Activated CD4-positive, alpha-beta T cell treated with anti-CD3 and anti-CD28 coated beads, Interleukin-2, amount 10 ng/mL, durations not matched to agents 24 days and 14 days (primary cell): ENCODE measurements at regions of chr1 and their contacts with region 1.

Region 1: GRCh38 chr1:183471743-183472487 is 384 bp upstream of the SMG7 start:
- DNase-seq: peak; percentile 97
- H3K4me3 Mint-ChIP-seq: peak overlapping the region; percentile 92
- H3K27ac Mint-ChIP-seq: peak overlapping the region; percentile 100
- H3K4me1 Mint-ChIP-seq: peaks cover 29% of the 10 kb centered on the region
- H3K27me3 Mint-ChIP-seq: no peaks in the 10 kb centered on the region

Region 2: GRCh38 chr1:182839209-182840065 is 632.5 kb before region 1 on chr1 and contains the start of gene DHX9:
- intact Hi-C with region 1: loop called (anchors 2 kb)
- DNase-seq: peak; percentile 99
- H3K4me3 Mint-ChIP-seq: peak within 1 kb of the TSS; percentile 92
- H3K27ac Mint-ChIP-seq: peak within 1 kb of the TSS; percentile 94
- H3K4me1 Mint-ChIP-seq: peaks cover 37% of the 10 kb centered on the region
- H3K27me3 Mint-ChIP-seq: peaks cover 3% of the 10 kb centered on the region
- total RNA-seq, gene DHX9: 344 and 355 TPM in 2 replicates

Region 3: DNA sequence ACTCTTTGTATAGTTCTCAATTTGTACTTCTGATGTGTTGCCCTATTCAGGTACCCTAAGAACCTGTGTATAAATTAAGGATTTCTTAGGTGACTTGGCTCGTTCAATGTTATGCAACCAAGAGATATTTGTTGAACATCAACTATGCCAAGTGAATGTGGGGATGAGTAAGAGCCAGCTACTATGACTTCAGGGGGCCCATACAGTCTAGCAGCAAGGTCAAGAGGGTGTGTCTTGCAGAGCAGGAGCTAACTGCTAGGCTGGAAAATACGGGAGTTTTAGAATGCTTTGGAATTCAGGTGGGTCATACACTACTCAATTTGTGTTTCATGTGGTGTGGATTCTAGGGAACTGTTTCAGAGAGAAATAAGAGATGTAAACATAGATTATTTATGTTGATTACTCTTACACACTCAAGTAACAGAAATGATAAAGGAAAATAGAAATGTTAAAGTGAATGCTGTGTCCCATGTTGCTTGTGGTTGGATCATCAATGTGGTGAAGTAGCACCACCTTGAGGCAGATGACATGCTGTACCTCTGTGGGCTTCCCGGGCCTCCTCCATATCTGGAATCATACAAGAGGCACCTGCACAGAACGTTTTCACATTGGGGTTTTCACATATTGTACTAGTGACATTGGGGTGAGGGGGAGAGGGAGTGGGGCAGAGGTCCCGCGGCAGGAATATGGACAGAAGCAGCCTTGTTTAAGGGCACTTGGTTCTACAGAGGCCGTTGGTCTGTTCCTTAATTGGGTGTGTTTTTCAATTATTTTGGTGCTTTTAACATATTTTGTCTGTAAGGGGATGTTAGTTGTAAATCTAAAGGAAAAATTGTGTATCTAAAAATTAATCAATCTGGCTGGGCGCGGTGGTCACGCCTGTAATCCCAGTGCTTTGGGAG is 151.2 kb after region 1 on chr1:
- intact Hi-C with region 1: loop called (anchors 2 kb)
- DNase-seq: peak; percentile 86
- H3K4me3 Mint-ChIP-seq: no peak overlapping the region
- H3K27ac Mint-ChIP-seq: peak overlapping the region; percentile 2
- H3K4me1 Mint-ChIP-seq: peaks cover 10% of the 10 kb centered on the region
- H3K27me3 Mint-ChIP-seq: no peaks in the 10 kb centered on the region

Region 4: GRCh38 chr1:183734543-183735036 is 262.7 kb after region 1 on chr1:
- intact Hi-C with region 1: no loop called
- DNase-seq: no peak
- H3K4me3 Mint-ChIP-seq: no peak overlapping the region
- H3K27ac Mint-ChIP-seq: no peak overlapping the region
- H3K4me1 Mint-ChIP-seq: peaks cover 2% of the 10 kb centered on the region
- H3K27me3 Mint-ChIP-seq: no peaks in the 10 kb centered on the region

Region 5: DNA sequence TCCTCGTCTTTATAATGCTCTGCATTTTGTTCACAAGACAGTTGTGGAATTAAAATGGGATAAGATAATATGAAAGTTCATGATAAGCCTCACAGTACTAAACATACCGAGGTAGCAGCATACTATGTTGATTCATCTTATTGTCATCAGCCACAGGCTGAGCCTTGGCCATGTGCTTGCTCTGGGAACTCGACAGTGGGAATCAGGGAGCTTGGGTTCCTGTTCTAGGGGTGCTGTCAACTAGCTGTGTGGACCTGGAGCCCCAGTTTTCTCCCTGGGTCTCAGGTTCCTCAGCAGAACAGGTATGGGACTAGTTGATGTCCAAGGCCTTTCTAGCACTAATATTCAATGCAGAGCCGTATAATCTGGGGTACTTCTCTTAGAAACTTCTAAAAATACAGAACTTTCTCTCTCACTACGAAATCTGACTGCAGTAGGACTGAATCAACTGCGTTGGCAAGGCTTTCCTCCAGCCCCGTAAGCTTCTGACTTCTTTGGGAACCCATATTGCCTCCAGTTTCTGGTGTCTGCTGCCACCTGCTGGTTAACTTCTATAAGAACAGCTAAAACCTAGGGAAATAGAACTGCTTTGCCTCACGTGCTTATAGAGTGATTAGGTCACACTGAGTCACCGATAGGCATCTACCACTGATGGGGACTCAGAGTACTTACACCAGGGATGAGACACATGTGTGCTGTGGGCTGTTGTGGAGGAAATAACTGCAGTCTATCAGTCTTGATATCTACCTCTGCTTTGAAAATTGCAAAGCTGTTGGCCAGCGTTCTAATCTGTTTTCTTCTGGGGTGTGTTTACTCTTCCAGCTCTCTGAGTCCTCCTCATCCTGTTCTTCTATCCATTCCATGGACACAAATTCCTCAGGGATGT is 444.0 kb after region 1 on chr1:
- intact Hi-C with region 1: loop called (anchors 10 kb)
- DNase-seq: peak; percentile 92
- H3K4me3 Mint-ChIP-seq: no peak overlapping the region
- H3K27ac Mint-ChIP-seq: no peak overlapping the region
- H3K4me1 Mint-ChIP-seq: peaks cover 15% of the 10 kb centered on the region
- H3K27me3 Mint-ChIP-seq: no peaks in the 10 kb centered on the region

Region 6: GRCh38 chr1:184163674-184164465 is 692.0 kb after region 1 on chr1:
- intact Hi-C with region 1: loop called (anchors 10 kb)
- DNase-seq: peak; percentile 61
- H3K4me3 Mint-ChIP-seq: no peak overlapping the region
- H3K27ac Mint-ChIP-seq: no peak overlapping the region
- H3K4me1 Mint-ChIP-seq: peaks cover 16% of the 10 kb centered on the region
- H3K27me3 Mint-ChIP-seq: peaks cover 2% of the 10 kb centered on the region